GM12878 (cell line): ENCODE measurements at regions of chr7 and their contacts with region 1.

Region 1: DNA sequence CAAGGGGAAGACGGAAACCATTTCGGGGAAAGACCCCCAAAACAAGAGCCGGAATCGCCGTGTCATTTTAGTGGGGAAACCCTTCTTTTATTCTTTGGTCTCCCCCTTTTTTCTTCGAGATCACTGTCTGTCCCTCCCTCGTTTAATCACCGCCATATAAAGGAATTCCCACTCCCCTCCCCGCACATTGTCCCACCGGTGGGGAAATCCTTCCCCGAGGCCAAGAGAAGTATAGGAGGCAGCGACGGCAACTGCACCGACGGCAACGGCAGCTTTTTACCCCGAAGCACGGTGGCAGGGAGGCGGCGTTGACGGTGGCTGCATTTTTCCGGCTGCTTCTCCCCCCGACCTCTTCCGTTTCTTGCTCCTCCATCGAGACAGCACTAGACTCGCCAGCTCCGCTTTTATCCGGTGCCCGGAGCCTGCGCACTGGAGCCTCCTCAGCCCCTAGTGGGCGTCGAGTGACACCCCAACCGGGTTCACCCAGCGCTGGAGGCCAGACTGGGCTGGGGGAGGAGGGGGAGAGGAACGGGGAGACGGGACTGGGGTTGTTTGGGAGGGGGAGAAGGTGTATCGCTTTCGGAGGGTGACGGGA is 687 bp upstream of the KMT2E start:
- DNase-seq: peak; percentile 66
- ATAC-seq: peak; percentile 62
- H3K4me3 ChIP-seq: peak overlapping the region; percentile 100
- H3K27ac ChIP-seq: peak overlapping the region; percentile 100
- H3K4me1 ChIP-seq: peaks cover 4% of the 10 kb centered on the region
- H3K27me3 ChIP-seq: no peaks in the 10 kb centered on the region
- CTCF ChIP-seq: peak; percentile 45 to 69 (median 67)
- EP300 ChIP-seq: no peak; a peak in 1 of 4 replicates
- POLR2A ChIP-seq: peak; percentile 85
- RAD21 ChIP-seq: peak; percentile 8; the same call in 1 of the 2 replicates

Region 2: DNA sequence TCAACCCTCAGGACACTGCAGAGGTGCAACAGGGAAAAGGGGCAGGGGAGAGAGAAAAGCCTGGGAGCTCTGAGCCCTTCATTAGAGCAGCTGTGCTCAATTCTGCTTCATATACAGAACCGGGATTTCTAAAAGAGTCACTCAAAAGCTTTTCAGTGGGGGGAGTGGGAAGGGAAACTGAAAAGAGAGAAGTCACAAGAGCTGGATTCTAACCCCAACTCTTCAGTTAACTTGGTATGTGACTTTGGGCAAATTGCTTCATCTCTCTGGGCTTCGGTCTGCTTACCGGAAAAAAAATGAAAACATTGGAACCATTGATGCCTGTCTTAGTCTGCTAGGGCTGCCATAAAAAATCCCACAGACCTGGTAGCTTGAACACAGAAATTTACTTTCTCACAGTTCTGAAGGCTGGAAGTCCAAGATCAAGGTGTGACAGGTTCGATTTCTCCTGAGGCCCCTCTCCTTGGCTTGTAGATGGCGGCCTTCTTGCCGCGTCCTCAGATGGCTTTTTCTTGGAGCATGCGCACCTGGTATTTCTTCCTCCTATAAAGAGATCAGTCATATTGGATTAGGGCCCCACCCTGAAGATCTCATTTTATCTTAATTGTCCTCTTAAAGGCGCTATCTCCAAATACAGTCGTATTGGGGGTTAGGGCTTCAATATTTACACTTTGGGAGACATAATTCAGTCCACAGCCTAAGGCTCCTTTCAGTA is 117.6 kb before region 1 on chr7:
- CTCF ChIA-PET with region 1: no interaction called
- POLR2A ChIA-PET with region 1: interaction called, 3 read pairs
- RAD21 ChIA-PET with region 1: no interaction called
- SMC1A ChIA-PET with region 1: interaction called, 5 read pairs
- in situ Hi-C with region 1: no loop called
- intact Hi-C with region 1: loop called (anchors 2 kb)
- DNase-seq: peak; percentile 83
- ATAC-seq: peak; percentile 55
- H3K4me3 ChIP-seq: peak overlapping the region; percentile 69
- H3K27ac ChIP-seq: peak overlapping the region; percentile 97
- H3K4me1 ChIP-seq: peaks cover 69% of the 10 kb centered on the region
- H3K27me3 ChIP-seq: no peaks in the 10 kb centered on the region
- CTCF ChIP-seq: no peak
- EP300 ChIP-seq: peak; percentile 58 to 60; a peak in 1 of 4 replicates
- POLR2A ChIP-seq: no peak
- RAD21 ChIP-seq: no peak

Region 3: DNA sequence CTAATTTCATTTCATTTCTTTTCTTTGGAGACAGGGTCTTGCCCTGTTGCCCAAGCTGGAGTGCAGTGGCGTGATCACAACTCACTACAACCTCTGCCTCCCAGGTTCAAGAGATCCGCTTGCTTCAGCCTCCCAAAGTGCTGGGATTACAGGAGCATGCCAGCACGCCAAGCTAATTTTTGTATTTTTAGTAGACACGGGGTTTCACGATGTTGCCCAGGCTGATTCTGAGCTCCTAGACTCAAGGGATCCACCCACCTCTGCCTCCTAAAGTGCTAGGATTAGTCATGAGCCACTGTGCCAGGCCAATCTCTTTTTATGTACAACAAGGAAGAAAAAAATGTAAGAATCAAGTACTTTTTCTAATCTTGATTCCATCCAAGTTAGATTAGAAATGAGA is 10.0 kb before region 1 on chr7:
- CTCF ChIA-PET with region 1: interaction called, 6 read pairs
- POLR2A ChIA-PET with region 1: interaction called, 14 read pairs
- RAD21 ChIA-PET with region 1: interaction called, 14 read pairs
- SMC1A ChIA-PET with region 1: interaction called, 23 read pairs
- in situ Hi-C with region 1: no loop called
- intact Hi-C with region 1: no loop called
- DNase-seq: no peak
- ATAC-seq: peak; percentile 54
- H3K4me3 ChIP-seq: 0 out of 2 replicates have a peak overlapping the region, but pooled peaks have one; percentile 9
- H3K27ac ChIP-seq: no peak overlapping the region
- H3K4me1 ChIP-seq: peaks cover 10% of the 10 kb centered on the region; the same call in 1 of the 2 replicates
- H3K27me3 ChIP-seq: no peaks in the 10 kb centered on the region
- CTCF ChIP-seq: no peak
- EP300 ChIP-seq: no peak
- POLR2A ChIP-seq: no peak
- RAD21 ChIP-seq: no peak

Region 4: GRCh38 chr7:105036217-105037168 is 23.2 kb after region 1 on chr7:
- CTCF ChIA-PET with region 1: interaction called, 10 read pairs
- POLR2A ChIA-PET with region 1: interaction called, 5 read pairs
- RAD21 ChIA-PET with region 1: interaction called, 8 read pairs
- SMC1A ChIA-PET with region 1: interaction called, 7 read pairs
- in situ Hi-C with region 1: no loop called
- intact Hi-C with region 1: no loop called
- DNase-seq: no peak
- ATAC-seq: peak; percentile 48
- H3K4me3 ChIP-seq: no peak overlapping the region
- H3K27ac ChIP-seq: no peak overlapping the region
- H3K4me1 ChIP-seq: 0 out of 2 replicates have a peak, but pooled peaks cover 4% of the 10 kb centered on the region
- H3K27me3 ChIP-seq: no peaks in the 10 kb centered on the region
- CTCF ChIP-seq: no peak
- EP300 ChIP-seq: no peak
- POLR2A ChIP-seq: no peak
- RAD21 ChIP-seq: no peak

Region 5: GRCh38 chr7:105060437-105060836 is 47.1 kb after region 1 on chr7:
- CTCF ChIA-PET with region 1: interaction called, 3 read pairs
- POLR2A ChIA-PET with region 1: no interaction called
- RAD21 ChIA-PET with region 1: interaction called, 3 read pairs
- SMC1A ChIA-PET with region 1: interaction called, 10 read pairs
- in situ Hi-C with region 1: no loop called
- intact Hi-C with region 1: no loop called
- DNase-seq: no peak
- ATAC-seq: no peak; the same call in 2 of the 3 replicates
- H3K4me3 ChIP-seq: no peak overlapping the region
- H3K27ac ChIP-seq: no peak overlapping the region
- H3K4me1 ChIP-seq: no peaks in the 10 kb centered on the region
- H3K27me3 ChIP-seq: no peaks in the 10 kb centered on the region
- CTCF ChIP-seq: no peak
- EP300 ChIP-seq: no peak
- POLR2A ChIP-seq: no peak
- RAD21 ChIP-seq: no peak

Region 6: DNA sequence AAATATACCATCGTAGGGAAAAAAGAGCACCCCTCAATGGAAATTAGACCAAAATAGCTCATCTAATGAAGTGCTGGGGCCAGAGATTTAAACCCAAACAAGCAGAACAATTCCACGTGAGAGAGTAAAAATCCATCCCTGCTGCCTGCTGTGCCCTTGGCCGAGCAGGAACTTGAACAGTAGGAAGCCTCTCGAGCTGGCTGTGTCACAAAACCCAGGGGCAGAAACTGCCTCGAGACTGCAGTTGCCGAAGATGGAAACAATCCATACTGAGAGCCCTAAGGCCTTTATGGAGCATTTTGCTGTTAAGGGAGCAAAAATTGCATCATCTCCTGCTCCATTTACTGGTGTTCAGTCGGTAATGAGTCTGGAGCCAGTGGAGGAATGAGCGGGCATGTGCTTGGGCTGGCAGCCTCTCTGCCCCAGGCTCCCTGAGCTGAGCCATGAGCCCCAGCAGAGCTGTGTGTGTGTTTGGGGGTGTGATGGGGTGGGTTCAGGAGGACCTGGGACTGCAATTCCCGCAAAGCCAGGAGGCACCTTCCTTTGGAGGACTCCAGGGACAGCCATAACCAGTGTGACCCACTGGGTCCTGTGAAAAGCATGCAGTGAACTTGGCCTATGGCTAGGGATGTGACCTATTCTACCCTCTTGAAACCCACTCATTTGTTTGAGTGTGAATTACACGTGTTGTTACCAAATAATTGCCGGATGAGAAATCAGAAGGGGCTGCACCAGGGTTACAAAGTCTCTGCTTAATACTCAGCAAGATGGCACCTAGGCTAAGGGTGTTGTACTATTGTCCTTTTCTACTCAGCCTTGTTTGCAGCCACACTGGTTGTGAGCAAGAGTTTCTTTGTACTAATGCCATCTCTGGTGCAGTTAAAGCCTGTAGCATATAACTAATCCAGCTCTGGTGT is 1008.1 kb after region 1 on chr7:
- CTCF ChIA-PET with region 1: no interaction called
- POLR2A ChIA-PET with region 1: no interaction called
- RAD21 ChIA-PET with region 1: no interaction called
- SMC1A ChIA-PET with region 1: no interaction called
- in situ Hi-C with region 1: no loop called
- intact Hi-C with region 1: no loop called
- DNase-seq: no peak
- ATAC-seq: no peak
- H3K4me3 ChIP-seq: no peak overlapping the region
- H3K27ac ChIP-seq: no peak overlapping the region
- H3K4me1 ChIP-seq: peaks cover 25% of the 10 kb centered on the region
- H3K27me3 ChIP-seq: no peaks in the 10 kb centered on the region
- CTCF ChIP-seq: no peak
- EP300 ChIP-seq: no peak
- POLR2A ChIP-seq: no peak
- RAD21 ChIP-seq: no peak